Aorta (tissue), 5 donors: ENCODE measurements at regions of chr7 and their contacts with region 1.

Region 1: GRCh38 chr7:28853834-28854749 is 104.0 kb downstream of the TRIL start:
- DNase-seq: peak; percentile 82 to 94
- ATAC-seq: peak; percentile 96
- H3K4me3 ChIP-seq: peak overlapping the region in 1 of 2 donors; percentile 58
- H3K27ac ChIP-seq: no peak overlapping the region
- H3K4me1 ChIP-seq: no peaks in the 10 kb centered on the region
- H3K27me3 ChIP-seq: no peaks in the 10 kb centered on the region

Region 2: GRCh38 chr7:28298870-28299518 is 555.1 kb before region 1 on chr7:
- intact Hi-C with region 1: loop called (anchors 5 to 10 kb)
- DNase-seq: no peak
- ATAC-seq: peak; percentile 56
- H3K4me3 ChIP-seq: no peak overlapping the region
- H3K27ac ChIP-seq: no peak overlapping the region
- H3K4me1 ChIP-seq: no peaks in the 10 kb centered on the region
- H3K27me3 ChIP-seq: no peaks in the 10 kb centered on the region

Region 3: GRCh38 chr7:28389504-28390395 is 464.3 kb before region 1 on chr7:
- intact Hi-C with region 1: loop called (anchors 1 to 2 kb)
- DNase-seq: no peak
- ATAC-seq: peak; percentile 69
- H3K4me3 ChIP-seq: peak overlapping the region; percentile 38 to 70
- H3K27ac ChIP-seq: no peak overlapping the region
- H3K4me1 ChIP-seq: no peaks in the 10 kb centered on the region
- H3K27me3 ChIP-seq: no peaks in the 10 kb centered on the region

Region 4: DNA sequence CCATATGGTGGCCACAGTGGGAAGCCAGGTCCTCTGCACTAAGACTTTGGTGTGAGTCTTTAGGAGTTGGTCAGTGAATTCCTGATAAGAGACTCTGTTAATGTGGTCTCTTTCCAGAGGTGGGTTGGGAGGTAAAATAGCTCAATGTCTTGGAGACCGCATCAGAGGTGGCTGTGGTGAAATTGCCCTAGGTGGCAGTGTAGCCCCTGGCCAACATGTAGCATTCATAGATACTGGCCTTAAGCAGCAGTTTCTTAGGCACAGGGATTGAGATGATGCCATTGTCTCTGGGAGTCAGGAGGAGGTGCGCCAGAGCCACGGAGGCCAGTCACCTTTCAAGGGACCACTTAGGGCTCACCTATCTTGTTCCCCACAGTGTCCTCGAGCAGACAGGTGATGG is 239.0 kb before region 1 on chr7:
- intact Hi-C with region 1: loop called (anchors 5 to 10 kb)
- DNase-seq: no peak
- ATAC-seq: peak; percentile 29
- H3K4me3 ChIP-seq: no peak overlapping the region
- H3K27ac ChIP-seq: no peak overlapping the region
- H3K4me1 ChIP-seq: no peaks in the 10 kb centered on the region
- H3K27me3 ChIP-seq: no peaks in the 10 kb centered on the region

Region 5: DNA sequence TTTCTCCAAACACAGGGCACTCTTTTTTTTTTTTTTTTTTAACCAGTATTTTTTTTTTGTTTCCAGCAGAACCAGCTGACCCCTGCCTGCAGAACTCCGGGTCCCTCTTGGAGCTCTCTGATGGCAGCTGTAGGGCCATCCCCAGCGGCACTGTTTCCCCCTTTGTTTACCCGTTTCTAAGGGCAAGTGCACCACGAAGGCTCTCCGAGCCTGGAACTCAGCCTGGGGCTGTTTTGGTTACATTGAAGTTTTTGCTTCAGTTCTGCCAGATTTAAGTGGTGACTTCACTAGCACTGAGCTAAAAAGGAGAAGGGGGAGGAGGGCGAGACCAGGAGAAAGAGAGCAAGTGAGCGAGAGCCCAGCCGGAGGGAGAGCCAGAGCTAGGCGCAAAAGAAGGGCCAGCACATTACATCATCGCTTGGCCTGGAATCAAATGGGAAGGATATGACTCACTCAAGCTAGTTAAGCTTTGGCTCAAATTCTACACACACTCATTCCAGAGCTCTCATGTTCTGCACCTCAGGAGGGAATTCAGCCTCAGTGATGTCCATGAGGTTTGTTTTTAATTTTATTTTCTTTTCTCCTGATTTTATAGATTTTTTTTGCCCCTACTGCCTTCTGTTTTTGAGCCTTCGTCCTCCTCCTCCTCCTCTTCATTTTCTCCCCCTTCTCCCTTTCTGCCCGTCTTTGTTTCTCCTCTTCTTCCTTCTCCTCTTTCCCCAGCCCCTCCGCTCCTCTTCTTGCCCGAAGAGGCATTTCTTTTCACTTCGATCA is 168.3 kb before region 1 on chr7:
- intact Hi-C with region 1: loop called in 1 of 2 experiments (anchors 10 kb)
- DNase-seq: peak; percentile 94 to 96
- ATAC-seq: peak; percentile 96
- H3K4me3 ChIP-seq: peak overlapping the region; percentile 85 to 88
- H3K27ac ChIP-seq: peak overlapping the region; percentile 83 to 85
- H3K4me1 ChIP-seq: no peaks in the 10 kb centered on the region
- H3K27me3 ChIP-seq: no peaks in the 10 kb centered on the region